ENCODE measurements at regions of chr18 and their contacts with region 1.

Region 1: GRCh38 chr18:812376-813171 is 532 bp upstream of the YES1 start:
- DNase-seq: peak; percentile 95
- H3K4me3 Mint-ChIP-seq: peak overlapping the region; percentile 97
- H3K27ac Mint-ChIP-seq: peak overlapping the region; percentile 100
- H3K4me1 Mint-ChIP-seq: peaks cover 65% of the 10 kb centered on the region
- H3K27me3 Mint-ChIP-seq: peaks cover 3% of the 10 kb centered on the region

Region 2: GRCh38 chr18:158128-159036 is 654.2 kb before region 1 on chr18 and contains the start of gene USP14:
- intact Hi-C with region 1: loop called (anchors 5 kb)
- DNase-seq: peak; percentile 99
- H3K4me3 Mint-ChIP-seq: peak within 1 kb of the TSS; percentile 96
- H3K27ac Mint-ChIP-seq: peak within 1 kb of the TSS; percentile 93
- H3K4me1 Mint-ChIP-seq: peaks cover 16% of the 10 kb centered on the region
- H3K27me3 Mint-ChIP-seq: no peaks in the 10 kb centered on the region
- total RNA-seq, gene USP14: 97.9 and 103 TPM in 2 replicates

Region 3: GRCh38 chr18:950882-951539 is 138.4 kb after region 1 on chr18:
- intact Hi-C with region 1: no loop called
- DNase-seq: no peak
- H3K4me3 Mint-ChIP-seq: no peak overlapping the region
- H3K27ac Mint-ChIP-seq: no peak overlapping the region
- H3K4me1 Mint-ChIP-seq: no peaks in the 10 kb centered on the region
- H3K27me3 Mint-ChIP-seq: no peaks in the 10 kb centered on the region